ENCODE measurements at regions of chr6 and their contacts with region 1.

Region 1: DNA sequence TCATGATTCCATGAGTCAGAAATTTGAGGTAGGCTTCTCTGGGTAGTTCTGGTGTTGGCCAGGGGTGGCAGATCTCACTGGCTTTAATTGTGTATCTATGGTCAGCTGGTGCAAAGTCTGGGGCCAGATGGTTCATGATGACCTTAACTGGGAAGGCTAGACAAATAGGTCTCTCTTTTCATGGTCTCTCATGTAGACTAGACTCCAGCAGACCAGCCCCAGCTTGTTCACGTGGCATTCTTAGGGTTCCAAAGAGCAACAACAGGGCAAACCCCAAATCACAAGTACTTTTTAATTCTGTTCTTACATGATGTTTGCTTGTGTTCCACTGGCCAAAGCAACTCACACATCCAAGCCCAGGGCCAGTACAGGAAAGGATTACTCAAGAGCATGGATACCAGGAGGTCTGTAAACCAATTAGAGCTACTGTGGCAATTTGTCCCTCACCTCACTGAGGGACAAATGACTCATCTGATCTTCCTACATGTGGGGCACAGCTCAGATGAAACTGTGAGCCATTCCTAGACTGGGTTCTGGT is 79.5 kb upstream of the PBOV1 start:
- DNase-seq: no peak
- ATAC-seq: no peak
- H3K4me3 ChIP-seq: no peak overlapping the region
- H3K4me3 Mint-ChIP-seq: no peak overlapping the region
- H3K27ac ChIP-seq: no peak overlapping the region
- H3K27ac Mint-ChIP-seq: no peak overlapping the region
- H3K4me1 ChIP-seq: no peaks in the 10 kb centered on the region
- H3K4me1 Mint-ChIP-seq: no peaks in the 10 kb centered on the region
- H3K27me3 ChIP-seq: no peaks in the 10 kb centered on the region
- H3K27me3 Mint-ChIP-seq: peaks cover 11% of the 10 kb centered on the region
- CTCF ChIP-seq: no peak

Region 2: DNA sequence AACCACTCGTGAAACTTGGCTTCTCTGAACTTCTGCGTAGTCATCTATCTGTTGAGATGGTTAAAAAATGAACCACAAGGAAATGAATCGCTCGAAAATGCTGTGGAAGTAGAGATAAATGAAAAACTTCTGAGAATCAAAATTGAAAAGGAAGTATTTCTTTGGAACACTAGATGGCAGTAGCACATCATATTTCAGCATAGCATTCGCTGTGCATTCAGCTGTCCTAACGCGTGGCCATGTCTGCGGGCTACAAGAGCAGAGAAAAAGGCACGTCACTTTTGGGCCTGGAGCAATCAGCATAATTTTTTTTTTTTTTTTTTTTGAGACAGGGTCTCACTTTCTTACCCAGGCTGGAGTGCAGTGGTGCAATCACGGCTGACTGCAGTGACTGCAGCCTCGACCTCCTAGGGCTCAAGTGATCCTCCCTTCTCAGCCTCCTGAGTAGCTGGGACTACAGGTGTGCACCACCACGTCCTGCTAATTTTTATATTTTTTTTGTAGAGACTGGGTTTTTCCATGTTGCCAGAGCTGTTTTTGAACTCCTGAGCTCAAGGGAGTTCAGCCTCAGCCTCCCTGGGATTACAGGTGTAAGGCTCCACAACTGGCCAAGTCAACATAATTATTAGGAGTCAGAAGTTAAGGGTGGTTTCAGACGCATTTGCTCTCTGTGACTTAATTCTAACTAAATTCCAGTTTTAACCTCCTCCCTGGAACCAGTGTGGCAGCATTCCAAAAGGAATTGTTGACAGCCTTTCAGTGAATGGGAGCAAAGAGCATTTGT is 181.8 kb before region 1 on chr6:
- CTCF ChIA-PET with region 1: no interaction called
- POLR2A ChIA-PET with region 1: no interaction called
- intact Hi-C with region 1: no loop called
- DNase-seq: peak in 8 of 9 experiments; percentile 9 to 80 (median 41)
- ATAC-seq: peak; percentile 83
- H3K4me3 ChIP-seq: no peak overlapping the region
- H3K4me3 Mint-ChIP-seq: no peak overlapping the region
- H3K27ac ChIP-seq: no peak overlapping the region
- H3K27ac Mint-ChIP-seq: no peak overlapping the region
- H3K4me1 ChIP-seq: no peaks in the 10 kb centered on the region
- H3K4me1 Mint-ChIP-seq: peaks cover 4% of the 10 kb centered on the region
- H3K27me3 ChIP-seq: peaks cover 0 to 6% of the 10 kb centered on the region in 2 experiments
- H3K27me3 Mint-ChIP-seq: peaks cover 25% of the 10 kb centered on the region
- CTCF ChIP-seq: peak; percentile 90

Region 3: DNA sequence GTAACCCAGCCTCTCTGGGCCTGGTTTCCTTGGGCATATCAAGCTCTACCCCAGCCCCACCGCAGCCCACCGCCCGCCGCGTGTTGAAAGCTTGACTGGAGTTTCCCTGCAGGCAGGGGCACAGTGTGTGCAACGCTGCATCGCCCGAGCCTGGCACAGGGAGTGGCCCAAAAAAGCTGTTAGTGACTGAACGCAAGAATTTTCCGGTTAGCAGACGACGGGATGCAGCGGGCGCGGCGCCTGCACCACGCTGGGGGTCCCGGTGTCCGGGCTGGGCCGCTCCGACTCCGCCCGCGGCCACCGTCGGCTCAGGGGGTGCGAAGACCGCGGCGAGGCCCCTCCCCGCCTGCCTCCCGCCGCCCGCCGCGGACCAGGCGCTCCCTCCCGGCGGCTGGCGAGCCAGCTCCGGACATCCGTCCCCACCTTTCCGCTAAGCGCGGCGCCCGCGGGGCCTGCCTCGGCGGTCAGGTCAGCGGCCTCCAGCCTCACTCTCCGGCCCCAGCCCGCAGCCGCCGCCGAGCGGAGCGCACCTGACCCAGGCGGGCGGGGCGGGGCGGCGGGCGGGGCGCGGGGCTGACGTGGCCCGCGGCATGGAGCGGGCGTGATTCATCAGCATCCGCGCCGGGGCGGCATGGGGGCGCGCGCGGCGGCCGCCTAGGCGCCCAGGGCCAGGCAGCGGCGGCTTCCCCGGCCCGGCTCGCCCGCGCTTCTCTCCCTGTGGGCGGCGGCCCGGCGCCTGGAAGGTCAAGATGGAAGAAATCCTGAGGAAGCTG is 136.3 kb before region 1 on chr6 and contains the start of gene ARFGEF3:
- CTCF ChIA-PET with region 1: no interaction called
- POLR2A ChIA-PET with region 1: no interaction called
- intact Hi-C with region 1: no loop called
- DNase-seq: peak in 8 of 9 experiments; percentile 36 to 63 (median 48)
- ATAC-seq: peak; percentile 91
- H3K4me3 ChIP-seq: peak within 1 kb of the TSS; percentile 29 to 34
- H3K4me3 Mint-ChIP-seq: peak within 1 kb of the TSS; percentile 70
- H3K27ac ChIP-seq: no peak within 1 kb of the TSS
- H3K27ac Mint-ChIP-seq: no peak within 1 kb of the TSS
- H3K4me1 ChIP-seq: peaks cover 8% of the 10 kb centered on the region
- H3K4me1 Mint-ChIP-seq: peaks cover 8% of the 10 kb centered on the region
- H3K27me3 ChIP-seq: peaks cover 18 to 20% of the 10 kb centered on the region in 2 experiments
- H3K27me3 Mint-ChIP-seq: peaks cover 57% of the 10 kb centered on the region
- CTCF ChIP-seq: no peak
- total RNA-seq, gene ARFGEF3: not detected

Region 4: DNA sequence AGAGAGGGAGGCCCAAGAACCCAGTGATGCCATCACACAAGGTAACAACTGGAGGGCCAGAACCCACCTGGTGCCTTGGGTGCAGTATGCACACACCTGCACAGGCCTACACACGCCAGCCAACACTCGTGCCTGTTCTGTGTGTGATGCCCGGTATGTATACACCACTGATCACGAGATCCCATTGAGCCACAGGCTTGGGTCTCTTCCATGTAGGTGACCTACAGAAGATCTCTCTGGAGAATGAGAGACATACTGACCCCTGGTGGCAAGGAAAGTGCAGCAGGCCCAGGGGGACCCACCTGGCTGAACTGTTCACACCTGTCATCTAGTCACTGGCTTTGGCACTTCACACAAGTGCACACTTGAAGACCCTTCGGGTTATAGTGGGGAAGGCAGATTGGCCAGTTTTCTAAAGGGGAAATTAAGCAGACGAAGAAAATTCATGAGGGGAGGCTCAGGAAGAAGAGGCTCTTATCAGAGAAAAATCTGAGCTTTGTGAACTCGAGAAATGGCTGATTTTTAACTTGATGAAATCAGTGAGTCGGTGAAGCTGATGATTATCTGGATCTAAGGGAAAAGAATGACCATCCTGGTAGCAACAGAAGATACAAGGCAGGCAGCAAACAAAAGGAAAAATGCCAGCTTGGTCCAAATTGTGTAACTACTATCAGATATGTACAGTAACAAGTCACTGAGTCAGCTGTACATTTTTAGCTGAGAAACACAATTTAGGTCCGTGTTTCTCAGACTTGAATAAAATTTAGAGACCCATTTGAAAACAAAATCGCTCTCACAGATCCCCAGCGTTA is 10.5 kb before region 1 on chr6:
- CTCF ChIA-PET with region 1: interaction called, 10 read pairs
- POLR2A ChIA-PET with region 1: no interaction called
- intact Hi-C with region 1: no loop called
- DNase-seq: peak in 8 of 9 experiments; percentile 31 to 59 (median 48)
- ATAC-seq: peak; percentile 46
- H3K4me3 ChIP-seq: no peak overlapping the region
- H3K4me3 Mint-ChIP-seq: no peak overlapping the region
- H3K27ac ChIP-seq: no peak overlapping the region
- H3K27ac Mint-ChIP-seq: no peak overlapping the region
- H3K4me1 ChIP-seq: no peaks in the 10 kb centered on the region
- H3K4me1 Mint-ChIP-seq: no peaks in the 10 kb centered on the region
- H3K27me3 ChIP-seq: no peaks in the 10 kb centered on the region
- H3K27me3 Mint-ChIP-seq: peaks cover 1% of the 10 kb centered on the region
- CTCF ChIP-seq: peak; percentile 47